PC-3 (cell line): ENCODE measurements at regions of chrX and their contacts with region 1.

Region 1: GRCh38 chrX:39907964-39908616 is 189.7 kb downstream of the BCOR start:
- DNase-seq: peak; percentile 94
- ATAC-seq: peak; percentile 79
- H3K4me3 ChIP-seq: peak overlapping the region; percentile 47; the same call in 1 of the 2 replicates
- H3K27ac ChIP-seq: peak overlapping the region; percentile 87
- H3K4me1 ChIP-seq: peaks cover 60% of the 10 kb centered on the region
- H3K27me3 ChIP-seq: no peaks in the 10 kb centered on the region
- CTCF ChIP-seq: no peak

Region 2: GRCh38 chrX:39795605-39796004 is 112.5 kb before region 1 on chrX:
- CTCF ChIA-PET with region 1: no interaction called
- POLR2A ChIA-PET with region 1: no interaction called
- intact Hi-C with region 1: no loop called
- DNase-seq: no peak
- ATAC-seq: no peak
- H3K4me3 ChIP-seq: no peak overlapping the region
- H3K27ac ChIP-seq: no peak overlapping the region
- H3K4me1 ChIP-seq: no peaks in the 10 kb centered on the region
- H3K27me3 ChIP-seq: no peaks in the 10 kb centered on the region
- CTCF ChIP-seq: no peak

Region 3: GRCh38 chrX:39953883-39954282 is 45.8 kb after region 1 on chrX:
- CTCF ChIA-PET with region 1: no interaction called
- POLR2A ChIA-PET with region 1: no interaction called
- intact Hi-C with region 1: loop called (anchors 5 kb)
- DNase-seq: peak; percentile 94
- ATAC-seq: peak; percentile 99
- H3K4me3 ChIP-seq: no peak overlapping the region
- H3K27ac ChIP-seq: peak overlapping the region; percentile 70
- H3K4me1 ChIP-seq: peaks cover 27% of the 10 kb centered on the region
- H3K27me3 ChIP-seq: no peaks in the 10 kb centered on the region
- CTCF ChIP-seq: no peak

Region 4: GRCh38 chrX:41090568-41091238 is 1182.6 kb after region 1 on chrX:
- CTCF ChIA-PET with region 1: no interaction called
- POLR2A ChIA-PET with region 1: interaction called, 22 read pairs
- intact Hi-C with region 1: no loop called
- DNase-seq: peak; percentile 49
- ATAC-seq: 0 out of 2 replicates have a peak, but pooled peaks have one; percentile 21
- H3K4me3 ChIP-seq: peak overlapping the region; percentile 94
- H3K27ac ChIP-seq: peak overlapping the region; percentile 78
- H3K4me1 ChIP-seq: peaks cover 42% of the 10 kb centered on the region
- H3K27me3 ChIP-seq: no peaks in the 10 kb centered on the region
- CTCF ChIP-seq: no peak